GM12878 (cell line): ENCODE measurements at regions of chr7 and their contacts with region 1.

Region 1: DNA sequence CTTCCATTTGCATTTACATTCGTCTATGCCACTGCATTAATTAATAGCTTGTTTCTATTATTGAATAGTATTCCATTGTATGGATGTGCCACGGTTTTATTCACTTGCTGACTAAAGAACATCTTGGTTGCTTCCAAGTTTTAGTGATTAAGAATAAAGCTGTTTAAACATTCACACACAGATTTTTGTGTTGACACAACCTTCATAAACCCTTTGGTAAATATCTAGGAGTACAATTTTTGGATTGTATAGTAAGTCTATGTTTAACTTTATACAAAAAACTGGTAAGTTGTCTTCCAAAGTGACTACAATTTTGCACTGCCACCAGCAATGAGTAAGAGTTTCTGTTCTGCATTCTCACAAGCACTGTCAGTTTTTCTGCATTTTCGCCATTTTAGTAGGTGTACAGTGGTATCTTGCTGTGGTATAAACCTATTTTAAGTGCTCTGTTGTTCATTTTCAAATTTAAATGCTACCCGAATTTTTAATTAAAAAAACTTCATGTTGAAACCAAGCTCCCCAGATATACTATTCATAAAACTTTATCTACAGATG is 121.4 kb downstream of the RNF133 start:
- DNase-seq: no peak
- ATAC-seq: peak; percentile 95
- H3K4me3 ChIP-seq: no peak overlapping the region
- H3K27ac ChIP-seq: no peak overlapping the region
- H3K4me1 ChIP-seq: no peaks in the 10 kb centered on the region
- H3K27me3 ChIP-seq: no peaks in the 10 kb centered on the region
- CTCF ChIP-seq: no peak
- EP300 ChIP-seq: no peak
- POLR2A ChIP-seq: no peak
- RAD21 ChIP-seq: no peak

Region 2: GRCh38 chr7:122556873-122557542 is 20.5 kb before region 1 on chr7:
- CTCF ChIA-PET with region 1: interaction called, 3 read pairs
- POLR2A ChIA-PET with region 1: no interaction called
- RAD21 ChIA-PET with region 1: interaction called, 3 read pairs
- SMC1A ChIA-PET with region 1: interaction called, 14 read pairs
- in situ Hi-C with region 1: no loop called
- intact Hi-C with region 1: no loop called
- DNase-seq: no peak
- ATAC-seq: no peak
- H3K4me3 ChIP-seq: no peak overlapping the region
- H3K27ac ChIP-seq: no peak overlapping the region
- H3K4me1 ChIP-seq: no peaks in the 10 kb centered on the region
- H3K27me3 ChIP-seq: no peaks in the 10 kb centered on the region; a peak in 1 of 4 replicates
- CTCF ChIP-seq: no peak
- EP300 ChIP-seq: no peak
- POLR2A ChIP-seq: no peak
- RAD21 ChIP-seq: no peak

Region 3: DNA sequence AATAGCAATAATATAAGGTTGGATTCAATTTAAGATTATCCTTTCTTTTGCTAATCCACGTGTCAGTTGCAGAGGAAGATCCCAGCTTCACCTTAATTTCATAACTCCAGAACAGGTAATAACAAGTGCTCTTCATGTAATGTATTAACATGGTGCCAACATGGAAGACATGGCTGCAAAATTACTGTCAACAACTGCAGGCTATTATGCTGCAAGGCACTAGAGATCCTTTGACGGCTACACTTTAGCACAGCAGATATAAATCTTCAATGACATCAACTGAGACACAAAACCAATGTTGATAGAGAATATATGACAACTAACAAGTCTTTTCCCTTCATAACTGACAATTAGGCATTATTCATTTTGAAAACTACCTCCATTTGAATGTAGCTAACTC is 25.3 kb after region 1 on chr7:
- CTCF ChIA-PET with region 1: interaction called, 3 read pairs
- POLR2A ChIA-PET with region 1: no interaction called
- RAD21 ChIA-PET with region 1: interaction called, 3 read pairs
- SMC1A ChIA-PET with region 1: interaction called, 12 read pairs
- in situ Hi-C with region 1: no loop called
- intact Hi-C with region 1: no loop called
- DNase-seq: no peak
- ATAC-seq: no peak
- H3K4me3 ChIP-seq: no peak overlapping the region
- H3K27ac ChIP-seq: no peak overlapping the region
- H3K4me1 ChIP-seq: no peaks in the 10 kb centered on the region
- H3K27me3 ChIP-seq: no peaks in the 10 kb centered on the region
- CTCF ChIP-seq: no peak
- EP300 ChIP-seq: no peak
- POLR2A ChIP-seq: no peak
- RAD21 ChIP-seq: no peak

Region 4: DNA sequence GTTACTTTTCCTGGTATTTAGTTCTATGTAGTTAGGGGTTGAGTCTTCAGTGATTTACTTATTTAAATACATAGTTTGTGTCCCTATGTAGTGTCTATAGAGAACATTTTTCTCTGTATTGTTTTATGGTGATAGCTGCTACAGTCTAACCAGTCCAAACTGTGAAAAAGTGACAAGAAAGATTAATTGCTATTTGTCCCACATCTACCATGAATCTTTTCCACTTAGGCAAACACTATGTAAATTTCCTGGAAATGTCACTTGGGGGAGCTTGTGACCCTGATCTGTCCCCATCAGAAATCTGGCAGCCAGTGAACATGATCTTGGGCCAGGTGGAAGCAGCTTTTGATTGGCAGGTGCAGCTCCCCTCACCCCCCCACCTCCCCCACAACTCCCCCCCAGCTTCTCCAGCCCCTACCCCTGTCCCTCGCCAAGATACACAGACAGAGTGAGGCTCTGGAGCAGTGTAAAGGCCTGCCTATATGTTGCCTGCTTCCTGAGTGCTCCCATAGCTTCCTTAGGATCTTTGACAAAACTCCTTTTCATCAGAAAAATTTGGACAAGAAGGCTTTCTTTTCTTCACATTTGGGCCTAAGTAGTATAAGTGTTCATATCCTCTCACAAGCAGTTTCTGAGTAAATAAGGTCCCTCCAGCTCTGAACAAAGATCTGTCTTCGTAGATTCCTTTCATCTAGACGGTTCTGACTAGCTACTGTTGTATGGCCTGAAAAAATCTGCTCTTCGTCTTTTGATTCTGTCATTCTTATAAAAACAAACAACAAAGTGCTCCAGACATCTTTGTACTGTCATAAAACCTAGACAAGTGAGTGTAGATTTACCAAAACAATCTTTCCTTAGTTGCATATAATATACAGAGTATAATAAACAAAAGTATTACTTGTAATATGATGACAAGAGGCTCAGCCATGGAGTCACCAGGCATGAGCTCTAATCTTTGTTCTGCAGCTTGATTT is 653.8 kb after region 1 on chr7:
- CTCF ChIA-PET with region 1: no interaction called
- POLR2A ChIA-PET with region 1: no interaction called
- RAD21 ChIA-PET with region 1: no interaction called
- SMC1A ChIA-PET with region 1: no interaction called
- in situ Hi-C with region 1: no loop called
- intact Hi-C with region 1: no loop called
- DNase-seq: no peak
- ATAC-seq: no peak
- H3K4me3 ChIP-seq: no peak overlapping the region
- H3K27ac ChIP-seq: no peak overlapping the region
- H3K4me1 ChIP-seq: no peaks in the 10 kb centered on the region
- H3K27me3 ChIP-seq: no peaks in the 10 kb centered on the region; a peak in 1 of 4 replicates
- CTCF ChIP-seq: no peak
- EP300 ChIP-seq: no peak
- POLR2A ChIP-seq: no peak
- RAD21 ChIP-seq: no peak

Region 5: GRCh38 chr7:123260428-123260960 is 683.0 kb after region 1 on chr7:
- CTCF ChIA-PET with region 1: no interaction called
- POLR2A ChIA-PET with region 1: no interaction called
- RAD21 ChIA-PET with region 1: no interaction called
- SMC1A ChIA-PET with region 1: no interaction called
- in situ Hi-C with region 1: no loop called
- intact Hi-C with region 1: no loop called
- DNase-seq: no peak
- ATAC-seq: no peak
- H3K4me3 ChIP-seq: no peak overlapping the region
- H3K27ac ChIP-seq: no peak overlapping the region
- H3K4me1 ChIP-seq: no peaks in the 10 kb centered on the region
- H3K27me3 ChIP-seq: no peaks in the 10 kb centered on the region
- CTCF ChIP-seq: no peak
- EP300 ChIP-seq: no peak
- POLR2A ChIP-seq: no peak
- RAD21 ChIP-seq: no peak